ENCODE measurements at regions of chr14 and their contacts with region 1.

Region 1: GRCh38 chr14:88092529-88092928 is 87.6 kb downstream of the GPR65 start:
- DNase-seq: no peak

Region 2: DNA sequence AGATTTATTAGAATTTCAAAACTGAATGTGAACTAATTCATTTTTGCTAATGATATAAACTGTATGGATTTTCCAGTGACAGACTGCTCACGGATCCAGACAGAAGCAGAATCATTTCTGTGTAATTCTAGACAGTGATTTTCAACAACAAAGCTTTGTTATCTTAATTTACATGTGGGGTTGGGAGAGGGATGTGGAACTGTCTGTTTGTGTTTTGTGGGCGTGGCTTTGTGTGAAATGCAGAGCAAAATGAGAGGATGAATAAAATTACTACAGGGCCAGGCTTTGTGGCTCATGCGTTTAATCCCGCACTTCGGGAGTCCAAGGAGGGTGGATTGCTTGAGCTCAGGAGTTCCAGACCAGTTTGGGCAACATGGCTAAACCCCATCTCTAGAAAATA is 934.2 kb before region 1 on chr14:
- intact Hi-C with region 1: loop called in 1 of 2 experiments (anchors 5 kb)
- DNase-seq: no peak